HAP-1 (cell line): ENCODE measurements at regions of chr3 and their contacts with region 1.

Region 1: GRCh38 chr3:143443851-143444331 is 324.3 kb downstream of the CHST2 start:
- DNase-seq: no peak
- H3K4me3 ChIP-seq: no peak overlapping the region
- H3K4me1 ChIP-seq: no peaks in the 10 kb centered on the region
- H3K27me3 ChIP-seq: no peaks in the 10 kb centered on the region

Region 2: DNA sequence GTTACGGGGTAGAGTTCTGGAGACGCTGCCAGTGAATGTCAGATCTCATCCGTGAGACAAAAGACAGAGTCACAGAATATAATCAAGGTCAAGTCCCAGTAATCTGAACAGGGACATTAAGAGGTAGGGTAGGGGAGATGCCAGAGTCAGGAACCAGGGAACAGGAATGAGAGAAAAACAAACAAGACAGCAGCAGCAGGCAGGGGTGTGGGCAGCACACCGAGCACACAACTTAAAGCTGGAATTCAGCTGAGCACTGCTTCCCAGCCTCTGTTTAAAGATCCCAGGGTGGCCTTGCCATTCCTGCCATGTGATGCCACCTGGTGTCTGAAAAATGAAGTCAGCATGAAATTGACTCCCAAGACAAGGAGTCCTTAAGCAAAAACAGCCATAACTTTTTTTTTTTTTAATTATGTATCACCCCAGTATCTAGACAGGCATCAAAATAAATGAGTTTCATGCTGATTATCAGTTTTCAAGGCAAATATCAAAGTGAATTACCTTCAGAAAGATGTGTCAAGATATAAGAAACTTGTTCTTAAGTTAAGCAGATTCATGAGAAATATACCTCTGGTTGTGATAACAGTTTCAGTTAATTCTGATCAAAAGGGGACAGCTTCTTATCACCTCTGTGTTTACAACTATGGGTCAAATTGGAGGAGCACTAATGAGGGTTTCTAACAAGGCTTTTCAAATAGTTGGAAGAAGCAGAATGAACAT is 200.6 kb after region 1 on chr3:
- in situ Hi-C with region 1: loop called (anchors 25 kb)
- DNase-seq: peak; percentile 51 to 67
- H3K4me3 ChIP-seq: no peak overlapping the region
- H3K4me1 ChIP-seq: no peaks in the 10 kb centered on the region; the same call in 1 of the 2 replicates
- H3K27me3 ChIP-seq: no peaks in the 10 kb centered on the region

Region 3: GRCh38 chr3:143718463-143718862 is 274.6 kb after region 1 on chr3:
- in situ Hi-C with region 1: no loop called
- DNase-seq: no peak
- H3K4me3 ChIP-seq: no peak overlapping the region
- H3K4me1 ChIP-seq: no peaks in the 10 kb centered on the region
- H3K27me3 ChIP-seq: no peaks in the 10 kb centered on the region